Heart right ventricle (tissue), 16 donors: ENCODE measurements at regions of chr6 and their contacts with region 1.

Region 1: GRCh38 chr6:104969785-104970581 is 13.1 kb downstream of the LIN28B start:
- DNase-seq: no peak
- ATAC-seq: no peak
- H3K4me3 ChIP-seq: no peak overlapping the region
- H3K27ac ChIP-seq: no peak overlapping the region
- H3K4me1 ChIP-seq: no peaks in the 10 kb centered on the region
- H3K27me3 ChIP-seq: peaks cover 0 to 12% (median 0%) of the 10 kb centered on the region in 7 donors
- CTCF ChIP-seq: no peak

Region 2: GRCh38 chr6:106666290-106667021 is 1696.5 kb after region 1 on chr6:
- intact Hi-C with region 1: loop called in 1 of 10 experiments (anchors 5 kb)
- DNase-seq: no peak
- ATAC-seq: no peak
- H3K4me3 ChIP-seq: no peak overlapping the region
- H3K27ac ChIP-seq: no peak overlapping the region
- H3K4me1 ChIP-seq: no peaks in the 10 kb centered on the region
- H3K27me3 ChIP-seq: no peaks in the 10 kb centered on the region
- CTCF ChIP-seq: no peak